BJ (cell line): ENCODE measurements at regions of chr10 and their contacts with region 1.

Region 1: GRCh38 chr10:69506834-69507721 is 55.8 kb downstream of the TSPAN15 start:
- DNase-seq: no peak
- H3K4me3 ChIP-seq: no peak overlapping the region
- H3K27me3 ChIP-seq: peaks cover 10% of the 10 kb centered on the region
- CTCF ChIP-seq: no peak

Region 2: GRCh38 chr10:69217119-69217754 is 289.8 kb before region 1 on chr10:
- CTCF ChIA-PET with region 1: no interaction called
- POLR2A ChIA-PET with region 1: no interaction called
- DNase-seq: peak; percentile 66
- H3K4me3 ChIP-seq: no peak overlapping the region
- H3K27me3 ChIP-seq: no peaks in the 10 kb centered on the region
- CTCF ChIP-seq: no peak

Region 3: GRCh38 chr10:69418052-69418752 is 88.9 kb before region 1 on chr10:
- CTCF ChIA-PET with region 1: interaction called, 112 read pairs
- POLR2A ChIA-PET with region 1: no interaction called
- DNase-seq: no peak
- H3K4me3 ChIP-seq: no peak overlapping the region
- H3K27me3 ChIP-seq: peaks cover 13% of the 10 kb centered on the region
- CTCF ChIP-seq: no peak

Region 4: DNA sequence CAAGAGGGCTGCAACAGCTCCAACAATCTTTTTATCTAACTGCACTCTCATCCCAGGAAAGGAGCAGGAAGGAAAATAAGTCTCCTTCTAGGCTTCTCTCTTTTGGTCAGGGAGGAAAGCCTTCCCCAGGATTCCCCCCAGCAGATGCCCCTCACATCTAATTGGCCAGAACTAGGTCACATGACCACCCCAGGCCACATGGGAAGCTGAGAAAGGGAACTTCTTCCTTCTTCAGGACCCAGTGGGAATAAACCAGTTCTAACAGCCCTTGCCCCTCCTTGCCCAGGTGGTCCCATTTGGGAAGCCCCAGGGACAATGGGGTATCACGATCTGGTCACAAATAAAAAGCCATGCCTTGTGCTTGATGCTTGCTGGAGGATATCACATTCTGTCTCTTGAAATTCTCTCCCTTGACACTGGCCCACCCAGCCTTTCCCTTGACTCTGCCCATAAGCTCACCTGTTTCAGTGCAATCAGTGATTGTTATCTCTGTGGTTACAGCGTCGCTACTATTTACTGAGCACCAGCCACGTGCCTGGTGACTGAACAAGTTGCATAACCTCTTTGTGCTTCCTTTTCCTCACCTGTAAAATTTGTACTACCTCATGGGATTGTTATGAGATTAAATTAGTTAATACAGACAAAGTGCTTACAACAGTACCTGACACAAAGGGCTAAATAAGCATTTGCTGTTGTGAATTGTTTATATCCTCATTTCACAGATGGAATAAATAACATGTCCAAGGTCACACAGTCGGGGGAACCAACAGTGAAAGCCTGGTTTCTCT is 81.4 kb before region 1 on chr10:
- CTCF ChIA-PET with region 1: interaction called, 112 read pairs
- POLR2A ChIA-PET with region 1: no interaction called
- DNase-seq: no peak
- H3K4me3 ChIP-seq: no peak overlapping the region
- H3K27me3 ChIP-seq: peaks cover 10% of the 10 kb centered on the region
- CTCF ChIP-seq: no peak

Region 5: GRCh38 chr10:69492091-69492750 is 14.9 kb before region 1 on chr10:
- CTCF ChIA-PET with region 1: interaction called, 13 read pairs
- POLR2A ChIA-PET with region 1: no interaction called
- DNase-seq: no peak
- H3K4me3 ChIP-seq: no peak overlapping the region
- H3K27me3 ChIP-seq: 0 out of 2 replicates have a peak, but pooled peaks cover 1% of the 10 kb centered on the region
- CTCF ChIP-seq: no peak